ENCODE measurements at regions of chr6 and their contacts with region 1.

Region 1: GRCh38 chr6:146700078-146700686 is 101.4 kb downstream of the ADGB start:
- DNase-seq: no peak

Region 2: DNA sequence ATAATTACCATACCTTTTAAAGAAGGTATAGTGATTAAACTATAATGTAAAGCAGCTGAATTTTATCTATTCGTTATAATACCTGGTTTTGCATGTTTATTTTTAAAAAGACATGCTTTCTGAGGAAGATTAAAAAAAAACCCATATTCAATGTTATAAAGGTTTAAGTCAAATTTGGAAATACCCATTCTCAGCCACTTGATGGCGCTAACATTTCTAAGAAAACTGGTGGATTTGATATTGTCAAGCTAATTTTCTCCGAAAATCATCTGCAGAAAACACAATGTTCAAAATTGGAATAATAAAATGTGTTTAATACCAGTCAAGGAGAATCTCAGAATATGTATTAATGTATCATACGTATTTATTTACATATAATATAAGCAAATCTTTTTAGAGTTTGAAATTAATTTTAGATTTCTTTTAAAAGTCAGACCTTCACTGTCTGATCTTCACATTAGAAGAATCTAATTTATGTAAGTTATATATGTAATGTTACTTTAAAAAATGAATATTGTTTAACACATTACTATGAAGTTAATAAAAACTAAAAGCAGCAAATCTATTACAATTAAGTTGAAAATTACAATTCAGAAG is 771.0 kb before region 1 on chr6:
- intact Hi-C with region 1: loop called (anchors 5 kb)
- DNase-seq: no peak

Region 3: DNA sequence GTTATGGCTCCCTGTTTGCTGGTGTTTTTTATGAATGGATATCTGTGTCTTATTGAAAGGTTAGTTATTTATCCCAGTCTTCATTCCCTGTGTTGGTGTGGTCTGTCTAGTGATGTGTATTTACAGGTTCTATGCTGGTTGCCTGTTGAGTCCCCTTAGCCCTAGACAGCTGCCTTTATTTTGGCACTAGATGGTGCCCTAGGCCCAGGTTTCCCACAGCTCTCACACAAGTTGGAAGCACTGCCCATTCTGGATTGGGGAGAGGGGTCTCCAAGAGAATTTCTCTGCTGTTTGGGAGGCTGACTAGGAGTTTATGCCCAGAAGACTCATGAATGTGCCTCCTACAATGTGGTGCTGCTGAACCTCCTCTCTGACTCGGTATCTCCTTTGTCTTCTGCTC is 658.9 kb before region 1 on chr6:
- intact Hi-C with region 1: loop called (anchors 5 kb)
- DNase-seq: no peak

Region 4: DNA sequence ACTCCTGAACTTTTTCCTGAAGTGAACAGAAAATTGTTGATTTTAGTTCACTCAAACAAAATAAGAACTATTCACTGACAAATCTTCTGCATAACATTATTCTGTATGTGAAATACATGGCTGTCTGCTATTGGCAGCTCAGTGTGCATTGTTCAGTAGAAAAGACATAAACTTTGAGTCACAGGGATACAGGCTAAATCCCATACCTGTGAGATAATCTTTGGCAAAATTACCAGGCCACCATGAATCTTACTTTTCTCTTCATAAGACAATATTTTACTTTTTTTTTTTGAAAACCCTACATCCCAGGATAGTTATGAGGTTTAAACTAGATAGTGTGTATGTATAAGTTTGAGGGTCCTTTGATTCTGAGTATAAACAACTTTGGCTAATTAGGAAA is 446.5 kb before region 1 on chr6:
- intact Hi-C with region 1: no loop called
- DNase-seq: no peak

Region 5: DNA sequence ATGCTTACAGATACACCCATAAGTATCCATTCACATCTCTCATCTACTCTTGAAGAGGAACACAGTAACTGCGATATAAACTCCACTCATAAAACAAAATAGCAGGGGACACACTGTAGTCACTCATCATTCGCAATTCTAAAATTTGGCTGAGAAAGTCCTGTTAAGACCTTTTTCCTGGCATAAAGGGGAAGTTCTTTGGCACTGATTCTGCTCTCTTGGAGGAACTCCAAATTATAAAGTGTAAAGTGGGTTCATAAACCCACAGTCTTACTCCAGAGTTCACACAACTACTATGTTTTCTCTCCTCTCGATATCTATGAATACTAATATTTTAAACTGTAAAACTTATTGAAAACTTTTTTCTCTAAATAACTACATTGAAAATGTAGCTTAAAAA is 20.8 kb before region 1 on chr6:
- intact Hi-C with region 1: no loop called
- DNase-seq: no peak

Region 6: DNA sequence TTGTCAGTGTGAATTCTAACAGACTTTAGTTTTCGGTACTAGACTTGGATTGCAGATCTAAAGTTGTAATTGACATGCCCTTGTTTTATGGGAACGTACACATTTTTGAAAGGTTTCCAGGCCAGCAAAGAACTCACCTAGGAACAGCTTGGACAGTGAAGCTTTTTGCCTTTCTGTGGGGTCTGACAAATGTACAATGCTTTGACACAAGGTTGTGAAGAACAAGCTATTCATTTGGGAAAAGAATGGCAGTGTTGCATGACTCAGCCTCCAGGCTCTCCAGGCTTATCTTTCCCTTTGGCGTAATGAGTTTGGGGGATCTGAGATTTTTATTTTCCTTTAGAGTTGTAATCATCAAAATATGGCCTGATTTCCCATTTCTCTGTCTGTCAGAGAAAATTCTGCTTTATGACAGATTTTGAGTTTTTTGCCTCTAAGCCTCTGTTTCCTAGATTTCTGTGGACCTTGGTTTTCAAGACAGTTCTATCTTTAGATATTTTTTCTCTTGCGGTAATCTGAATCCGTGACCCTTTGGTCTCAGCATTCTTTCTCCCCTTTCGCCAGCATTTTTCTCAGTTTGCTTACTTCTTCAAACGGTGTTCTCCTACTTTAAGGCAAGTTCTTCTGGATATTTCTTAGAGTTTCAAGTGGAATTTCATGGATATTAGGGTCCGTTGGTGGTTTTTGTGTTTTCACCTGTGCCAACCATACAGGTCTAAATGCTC is 119.6 kb after region 1 on chr6:
- intact Hi-C with region 1: no loop called
- DNase-seq: no peak

Region 7: DNA sequence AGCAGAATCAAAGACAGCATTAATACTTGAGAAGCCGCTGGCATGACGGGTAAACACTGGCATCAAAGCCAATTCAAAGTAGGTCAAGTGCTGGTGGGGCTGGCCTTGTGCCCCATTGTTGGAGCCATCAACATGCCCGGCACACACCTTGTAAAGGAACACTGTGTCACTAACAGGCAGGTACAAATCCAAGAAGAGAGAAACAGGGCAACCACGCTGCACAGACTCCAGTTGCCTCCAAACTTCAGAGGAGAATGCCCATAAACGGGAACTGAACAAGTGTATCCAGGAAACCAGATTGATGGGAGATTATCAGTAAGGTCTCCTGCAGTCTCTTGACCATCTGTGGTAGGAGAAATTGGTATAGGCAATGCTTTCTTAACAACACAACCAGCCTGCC is 377.1 kb after region 1 on chr6:
- intact Hi-C with region 1: no loop called
- DNase-seq: no peak